CD4-positive, alpha-beta T cell (primary cell): ENCODE measurements at regions of chr22 and their contacts with region 1.

Region 1: GRCh38 chr22:20463324-20464095 is 25.9 kb upstream of the SCARF2 start:
- DNase-seq: peak in 13 of 14 experiments; percentile 21 to 84 (median 40)
- ATAC-seq: peak; percentile 62
- H3K4me3 ChIP-seq: peak overlapping the region; percentile 0
- H3K4me3 Mint-ChIP-seq: peak overlapping the region; percentile 81
- H3K27ac ChIP-seq: peak overlapping the region; percentile 82 to 88
- H3K27ac Mint-ChIP-seq: peak overlapping the region; percentile 96
- H3K4me1 ChIP-seq: peaks cover 71% of the 10 kb centered on the region
- H3K4me1 Mint-ChIP-seq: peaks cover 68% of the 10 kb centered on the region
- H3K27me3 ChIP-seq: no peaks in the 10 kb centered on the region
- H3K27me3 Mint-ChIP-seq: no peaks in the 10 kb centered on the region
- CTCF ChIP-seq: no peak

Region 2: DNA sequence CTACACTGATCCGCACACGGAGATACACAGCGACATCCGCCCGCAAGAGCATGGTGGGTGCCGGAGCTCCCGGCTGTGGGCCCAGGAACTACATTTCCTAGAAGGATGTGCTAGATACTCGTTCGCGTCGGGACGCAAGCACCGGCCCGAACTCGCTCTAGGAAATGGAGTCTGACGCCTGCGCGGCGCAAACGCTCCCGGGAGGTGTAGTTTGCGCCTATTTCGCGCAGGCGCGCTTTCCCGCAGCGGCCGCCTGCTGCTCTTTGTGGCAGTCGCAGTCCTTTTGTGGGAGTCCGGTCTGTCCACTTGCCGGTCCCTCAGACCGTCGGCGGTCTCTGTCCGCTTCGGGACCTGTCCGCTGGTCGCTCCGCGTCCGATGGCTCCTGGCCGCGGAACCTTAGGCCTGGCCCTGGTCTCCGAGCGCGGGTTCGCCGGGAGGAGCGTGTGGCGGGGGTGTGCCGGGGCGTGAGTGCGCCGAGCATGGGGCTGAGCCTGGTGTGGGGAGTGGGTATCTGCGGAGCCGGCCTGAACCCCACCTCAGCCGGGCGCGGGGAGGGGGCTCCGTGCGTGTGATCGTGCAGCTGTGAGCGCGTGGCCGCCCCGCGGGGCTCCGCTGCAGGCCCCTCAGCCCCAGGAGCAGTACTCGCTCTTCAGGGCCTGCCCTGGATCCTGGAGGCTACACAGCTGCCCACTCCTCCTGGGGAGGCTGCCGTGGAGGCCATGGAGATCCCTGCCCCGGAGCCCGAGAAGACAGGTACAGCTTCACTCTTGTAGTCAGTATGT is 69.4 kb before region 1 on chr22 and contains the start of gene ZNF74:
- CTCF ChIA-PET with region 1: no interaction called
- POLR2A ChIA-PET with region 1: interaction called, 17 read pairs
- intact Hi-C with region 1: no loop called
- DNase-seq: peak; percentile 70 to 96 (median 83)
- ATAC-seq: peak; percentile 97
- H3K4me3 ChIP-seq: peak within 1 kb of the TSS; percentile 75
- H3K4me3 Mint-ChIP-seq: peak within 1 kb of the TSS; percentile 86
- H3K27ac ChIP-seq: peak within 1 kb of the TSS; percentile 26 to 64
- H3K27ac Mint-ChIP-seq: peak within 1 kb of the TSS; percentile 86
- H3K4me1 ChIP-seq: peaks cover 28% of the 10 kb centered on the region
- H3K4me1 Mint-ChIP-seq: peaks cover 30% of the 10 kb centered on the region
- H3K27me3 ChIP-seq: no peaks in the 10 kb centered on the region
- H3K27me3 Mint-ChIP-seq: no peaks in the 10 kb centered on the region
- CTCF ChIP-seq: no peak
- total RNA-seq, gene ZNF74: 1.7 to 2.3 TPM

Region 3: DNA sequence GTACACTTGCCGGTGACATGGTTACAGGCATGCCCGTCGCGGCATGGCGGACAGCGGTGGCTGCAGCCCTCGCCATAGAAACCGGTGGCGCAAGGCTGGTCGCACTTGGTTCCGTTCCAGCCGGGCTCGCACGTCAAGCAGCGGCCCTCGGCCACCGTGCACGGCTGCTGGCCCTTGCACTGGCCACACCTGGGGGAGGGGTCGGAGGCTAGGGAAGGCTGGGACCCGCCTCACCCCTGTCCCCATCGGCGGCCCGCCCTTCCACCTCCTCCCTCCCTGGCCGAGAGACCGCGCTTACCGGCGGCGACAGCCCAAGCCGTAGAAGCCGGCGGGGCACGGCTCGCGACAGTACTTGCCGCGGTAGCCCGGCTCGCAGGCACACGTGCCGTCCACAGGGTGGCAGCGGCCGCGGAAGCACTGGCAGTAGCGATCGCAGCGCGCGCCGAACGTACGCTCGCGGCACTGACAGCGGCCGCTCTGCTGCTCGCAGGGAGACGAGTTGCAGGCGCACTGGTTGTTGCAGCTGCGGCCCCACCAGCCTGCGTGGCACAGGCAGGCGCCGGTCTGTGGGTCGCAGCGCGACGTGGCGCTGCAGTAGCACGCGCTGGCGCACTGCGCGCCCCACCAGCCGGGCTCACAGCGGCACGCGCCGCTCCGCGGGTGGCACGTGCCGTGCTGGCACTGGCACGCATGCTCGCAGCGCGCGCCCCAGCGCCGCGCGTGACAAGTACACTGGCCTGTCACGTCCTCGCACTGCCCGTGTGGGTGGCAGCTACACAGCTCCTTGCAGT is 32.6 kb before region 1 on chr22:
- CTCF ChIA-PET with region 1: interaction called, 3 read pairs
- POLR2A ChIA-PET with region 1: interaction called, 67 read pairs
- intact Hi-C with region 1: no loop called
- DNase-seq: peak; percentile 45 to 88 (median 57)
- ATAC-seq: peak; percentile 64
- H3K4me3 ChIP-seq: peak overlapping the region; percentile 78
- H3K4me3 Mint-ChIP-seq: peak overlapping the region; percentile 79
- H3K27ac ChIP-seq: no peak overlapping the region
- H3K27ac Mint-ChIP-seq: no peak overlapping the region
- H3K4me1 ChIP-seq: peaks cover 46% of the 10 kb centered on the region
- H3K4me1 Mint-ChIP-seq: peaks cover 17% of the 10 kb centered on the region
- H3K27me3 ChIP-seq: peaks cover 34 to 40% of the 10 kb centered on the region in 2 experiments
- H3K27me3 Mint-ChIP-seq: peaks cover 53% of the 10 kb centered on the region
- CTCF ChIP-seq: peak; percentile 54

Region 4: DNA sequence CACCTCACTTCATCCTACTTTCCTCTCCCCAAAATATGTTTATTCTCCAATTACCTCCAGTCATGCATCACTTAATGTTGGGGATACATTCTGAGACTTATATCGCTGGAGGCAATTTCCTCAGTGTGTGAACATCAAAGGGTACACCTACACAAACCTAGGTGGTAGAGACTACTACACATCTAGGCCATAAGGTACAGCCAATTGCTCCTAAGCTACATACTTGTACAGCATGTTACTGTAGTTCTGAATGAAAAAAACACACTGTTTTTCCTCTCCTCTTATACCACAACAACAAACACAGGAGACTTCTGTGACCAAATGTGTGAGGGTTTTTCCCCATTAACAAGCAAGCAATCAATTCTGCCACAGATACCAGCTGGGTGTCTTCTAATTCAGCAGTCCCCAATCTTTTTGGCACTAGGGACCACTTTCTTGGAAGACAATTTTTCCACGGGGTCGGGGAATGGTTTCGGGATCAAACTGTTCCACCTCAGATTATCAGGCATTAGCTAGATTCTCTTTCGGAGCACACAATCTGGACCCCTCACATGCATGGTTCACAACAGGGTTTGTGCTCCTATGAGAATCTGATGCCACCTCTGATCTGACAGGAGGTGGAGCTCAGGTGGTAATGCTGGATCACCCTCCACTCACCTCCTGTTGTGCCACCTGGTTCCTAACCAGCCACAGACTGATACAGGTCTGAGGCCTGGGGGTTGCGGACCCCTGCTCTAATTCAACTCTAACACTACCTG is 26.9 kb after region 1 on chr22:
- CTCF ChIA-PET with region 1: no interaction called
- POLR2A ChIA-PET with region 1: interaction called, 56 read pairs
- intact Hi-C with region 1: no loop called
- DNase-seq: peak in 1 of 14 experiments; percentile 28
- ATAC-seq: peak; percentile 57
- H3K4me3 ChIP-seq: no peak overlapping the region
- H3K4me3 Mint-ChIP-seq: peak overlapping the region; percentile 30
- H3K27ac ChIP-seq: no peak overlapping the region
- H3K27ac Mint-ChIP-seq: peak overlapping the region; percentile 60
- H3K4me1 ChIP-seq: peaks cover 62% of the 10 kb centered on the region
- H3K4me1 Mint-ChIP-seq: peaks cover 74% of the 10 kb centered on the region
- H3K27me3 ChIP-seq: no peaks in the 10 kb centered on the region
- H3K27me3 Mint-ChIP-seq: no peaks in the 10 kb centered on the region
- CTCF ChIP-seq: no peak

Region 5: DNA sequence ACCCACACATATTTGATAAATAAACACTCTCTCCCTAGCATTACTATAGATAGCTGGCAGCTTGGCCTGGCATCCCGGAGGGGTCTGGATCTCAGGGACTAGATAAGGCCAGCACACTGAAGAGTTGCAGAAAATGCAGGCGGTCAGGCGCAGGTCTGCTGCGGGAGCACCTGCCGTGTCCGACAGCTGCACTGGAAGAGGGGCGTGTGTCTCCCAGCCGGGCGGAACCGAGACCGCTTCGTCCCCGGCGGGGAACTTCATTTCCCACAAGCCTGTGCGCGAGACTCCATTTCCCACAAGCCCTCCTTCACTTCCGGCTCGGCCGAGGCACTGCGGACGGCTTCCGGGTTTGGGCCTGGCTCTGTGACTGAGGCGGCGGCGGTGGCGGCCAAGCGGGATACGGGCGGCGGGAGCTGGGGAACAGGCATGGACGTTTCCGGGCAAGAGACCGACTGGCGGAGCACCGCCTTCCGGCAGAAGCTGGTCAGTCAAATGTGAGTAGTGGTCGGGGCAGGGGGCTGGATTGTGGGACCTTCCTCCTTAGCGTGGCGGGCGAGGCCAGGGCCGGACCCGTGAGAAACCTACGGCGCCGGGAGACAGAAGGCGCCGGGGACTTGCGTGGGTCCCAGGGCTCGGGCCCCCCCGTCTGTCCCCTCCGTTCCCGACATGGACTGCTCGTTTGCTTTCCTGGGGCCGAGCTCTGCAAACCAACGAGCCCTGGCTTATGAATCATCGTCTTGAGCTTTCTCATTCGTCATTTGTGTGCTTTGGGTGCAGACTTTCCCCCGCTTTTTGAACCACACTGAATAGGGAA is 44.0 kb after region 1 on chr22 and contains the start of gene MED15:
- CTCF ChIA-PET with region 1: no interaction called
- POLR2A ChIA-PET with region 1: interaction called, 33 read pairs
- intact Hi-C with region 1: no loop called
- DNase-seq: peak; percentile 77 to 93 (median 84)
- ATAC-seq: peak; percentile 83
- H3K4me3 ChIP-seq: peak within 1 kb of the TSS; percentile 100
- H3K4me3 Mint-ChIP-seq: peak within 1 kb of the TSS; percentile 98
- H3K27ac ChIP-seq: peak within 1 kb of the TSS; percentile 88 to 90
- H3K27ac Mint-ChIP-seq: peak within 1 kb of the TSS; percentile 94
- H3K4me1 ChIP-seq: peaks cover 42% of the 10 kb centered on the region
- H3K4me1 Mint-ChIP-seq: peaks cover 51% of the 10 kb centered on the region
- H3K27me3 ChIP-seq: no peaks in the 10 kb centered on the region
- H3K27me3 Mint-ChIP-seq: no peaks in the 10 kb centered on the region
- CTCF ChIP-seq: no peak
- total RNA-seq, gene MED15: 181 to 191 TPM

Region 6: DNA sequence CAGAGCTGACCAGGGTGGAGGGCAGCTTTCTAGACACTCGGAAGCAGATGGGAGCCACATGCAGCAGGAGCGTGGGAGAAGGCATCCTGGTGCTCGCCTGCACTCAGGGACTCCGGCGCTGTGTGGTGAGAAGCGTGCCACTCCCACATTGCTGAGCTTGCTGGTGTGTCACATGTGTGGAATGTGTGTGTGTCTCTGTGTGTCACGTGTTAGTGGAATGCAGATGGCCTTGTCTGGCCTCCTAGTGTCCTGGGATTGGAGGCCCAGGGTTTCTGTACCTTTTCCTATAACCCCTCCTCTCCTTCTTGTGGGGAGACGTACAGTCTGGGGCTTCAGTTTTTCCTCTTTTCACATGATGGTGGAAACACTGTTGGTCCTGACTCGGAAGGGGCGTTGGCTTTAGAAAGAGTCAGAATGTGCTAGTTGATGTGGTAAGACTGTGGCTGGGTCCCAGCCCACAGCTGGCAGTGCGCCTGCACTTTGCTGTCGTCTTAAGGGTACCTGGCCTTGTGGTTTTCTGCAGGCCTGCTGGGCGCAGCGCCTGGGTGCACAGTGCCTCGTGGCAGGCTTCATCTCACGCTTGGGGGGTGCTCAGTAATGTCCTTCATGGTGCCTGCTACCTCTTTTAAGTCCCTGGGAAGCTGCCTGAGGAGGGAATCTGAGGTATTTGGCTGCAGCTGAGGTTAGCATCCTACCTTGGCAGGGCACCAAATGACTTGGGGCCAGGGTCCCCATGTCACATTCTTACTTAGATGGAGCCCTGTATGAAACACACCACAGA is 105.7 kb after region 1 on chr22:
- CTCF ChIA-PET with region 1: interaction called, 9 read pairs
- POLR2A ChIA-PET with region 1: interaction called, 58 read pairs
- intact Hi-C with region 1: no loop called
- DNase-seq: peak; percentile 74 to 95 (median 84)
- ATAC-seq: peak; percentile 59
- H3K4me3 ChIP-seq: peak overlapping the region; percentile 27
- H3K4me3 Mint-ChIP-seq: peak overlapping the region; percentile 83
- H3K27ac ChIP-seq: peak overlapping the region; percentile 29 to 57
- H3K27ac Mint-ChIP-seq: peak overlapping the region; percentile 93
- H3K4me1 ChIP-seq: peaks cover 87% of the 10 kb centered on the region
- H3K4me1 Mint-ChIP-seq: peaks cover 89% of the 10 kb centered on the region
- H3K27me3 ChIP-seq: no peaks in the 10 kb centered on the region
- H3K27me3 Mint-ChIP-seq: no peaks in the 10 kb centered on the region
- CTCF ChIP-seq: no peak